Activated CD4-positive, alpha-beta T cell treated with anti-CD3 and anti-CD28 coated beads, Interleukin-2, amount 10 ng/mL, durations not matched to agents 7 days and 5 days (primary cell): ENCODE measurements at regions of chr20 and their contacts with region 1.

Region 1: DNA sequence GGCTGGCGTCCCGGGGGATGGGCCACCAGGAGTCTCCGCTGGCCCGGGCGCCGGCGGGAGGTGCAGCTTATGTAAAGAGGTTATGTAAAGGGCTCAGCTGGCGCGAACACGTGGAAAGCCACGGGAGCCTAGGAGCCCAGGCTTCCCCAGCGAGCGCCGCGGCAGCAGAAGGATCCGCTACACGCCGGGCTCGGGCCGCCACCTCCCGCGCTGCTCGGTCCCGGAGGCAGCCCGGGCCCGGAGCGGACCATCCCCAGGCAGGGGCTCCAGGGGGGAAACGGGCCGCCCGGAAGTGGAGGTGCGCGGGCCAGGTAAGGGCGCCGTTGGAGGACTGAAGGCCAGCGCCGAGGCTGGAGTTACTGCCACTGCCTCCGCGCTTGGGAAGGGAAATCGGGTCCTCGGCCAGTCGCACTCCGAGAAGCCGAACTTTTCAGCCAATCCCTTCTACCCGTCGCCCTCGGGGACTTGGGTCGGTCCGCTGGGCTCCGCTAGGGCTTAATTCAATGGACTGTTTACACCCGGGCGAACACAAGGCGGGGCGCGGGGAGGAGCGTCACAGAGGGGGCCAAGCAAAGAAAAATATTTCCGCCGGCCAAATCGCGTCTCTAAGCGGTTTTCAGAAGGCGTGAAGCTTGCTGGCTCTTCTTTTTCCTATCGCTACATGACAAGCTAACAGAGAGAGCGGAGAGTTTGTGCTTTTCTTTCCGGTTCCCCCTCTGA is 398 bp downstream of the STK35 start:
- DNase-seq: peak; percentile 91
- H3K4me3 Mint-ChIP-seq: peak overlapping the region; percentile 95
- H3K27ac Mint-ChIP-seq: peak overlapping the region; percentile 100
- H3K4me1 Mint-ChIP-seq: peaks cover 46% of the 10 kb centered on the region
- H3K27me3 Mint-ChIP-seq: peaks cover 4% of the 10 kb centered on the region

Region 2: DNA sequence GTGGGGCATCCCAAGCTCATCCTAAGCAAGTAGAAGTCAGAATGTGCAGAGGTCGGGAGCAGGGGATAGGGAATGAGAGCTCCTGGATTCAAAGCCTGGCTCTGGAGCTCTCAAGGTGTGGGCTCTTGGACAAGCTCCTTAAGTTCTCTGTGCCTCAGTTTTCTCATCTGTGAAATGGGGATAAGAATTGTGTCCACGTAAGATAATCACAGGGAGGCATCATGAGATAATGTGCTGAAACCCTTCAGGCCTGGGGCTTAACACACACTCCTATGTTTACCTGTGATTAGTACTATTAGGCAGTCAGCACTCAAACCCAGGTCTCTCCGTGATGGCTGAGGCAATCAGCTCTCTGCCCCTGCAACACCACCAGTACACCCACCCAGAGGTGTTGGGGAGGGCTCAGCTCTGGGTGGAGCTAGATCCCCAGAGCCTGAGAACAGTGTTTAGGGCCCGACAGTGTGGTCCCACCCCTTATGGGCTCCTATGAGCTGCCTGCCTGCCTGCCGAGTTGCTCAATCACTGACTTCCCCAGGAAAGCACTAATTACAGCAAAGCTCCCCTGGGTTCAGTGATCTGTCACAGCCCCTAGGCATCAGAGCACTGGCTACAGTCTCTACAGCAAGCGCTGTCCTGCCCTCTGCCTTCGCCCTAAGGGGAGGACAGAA is 213.1 kb before region 1 on chr20:
- CTCF ChIA-PET with region 1: no interaction called
- POLR2A ChIA-PET with region 1: no interaction called
- DNase-seq: no peak
- H3K4me3 Mint-ChIP-seq: no peak overlapping the region
- H3K27ac Mint-ChIP-seq: no peak overlapping the region
- H3K4me1 Mint-ChIP-seq: peaks cover under 1% of the 10 kb centered on the region
- H3K27me3 Mint-ChIP-seq: peaks cover 48% of the 10 kb centered on the region

Region 3: GRCh38 chr20:2032155-2032554 is 69.9 kb before region 1 on chr20:
- CTCF ChIA-PET with region 1: no interaction called
- POLR2A ChIA-PET with region 1: no interaction called
- DNase-seq: no peak
- H3K4me3 Mint-ChIP-seq: no peak overlapping the region
- H3K27ac Mint-ChIP-seq: no peak overlapping the region
- H3K4me1 Mint-ChIP-seq: no peaks in the 10 kb centered on the region
- H3K27me3 Mint-ChIP-seq: peaks cover 19% of the 10 kb centered on the region

Region 4: GRCh38 chr20:2114127-2114967 is 12.3 kb after region 1 on chr20:
- CTCF ChIA-PET with region 1: interaction called, 15 read pairs
- POLR2A ChIA-PET with region 1: no interaction called
- DNase-seq: no peak
- H3K4me3 Mint-ChIP-seq: no peak overlapping the region
- H3K27ac Mint-ChIP-seq: no peak overlapping the region
- H3K4me1 Mint-ChIP-seq: peaks cover 47% of the 10 kb centered on the region
- H3K27me3 Mint-ChIP-seq: no peaks in the 10 kb centered on the region